ENCODE measurements at regions of chr4 and their contacts with region 1.

Region 1: DNA sequence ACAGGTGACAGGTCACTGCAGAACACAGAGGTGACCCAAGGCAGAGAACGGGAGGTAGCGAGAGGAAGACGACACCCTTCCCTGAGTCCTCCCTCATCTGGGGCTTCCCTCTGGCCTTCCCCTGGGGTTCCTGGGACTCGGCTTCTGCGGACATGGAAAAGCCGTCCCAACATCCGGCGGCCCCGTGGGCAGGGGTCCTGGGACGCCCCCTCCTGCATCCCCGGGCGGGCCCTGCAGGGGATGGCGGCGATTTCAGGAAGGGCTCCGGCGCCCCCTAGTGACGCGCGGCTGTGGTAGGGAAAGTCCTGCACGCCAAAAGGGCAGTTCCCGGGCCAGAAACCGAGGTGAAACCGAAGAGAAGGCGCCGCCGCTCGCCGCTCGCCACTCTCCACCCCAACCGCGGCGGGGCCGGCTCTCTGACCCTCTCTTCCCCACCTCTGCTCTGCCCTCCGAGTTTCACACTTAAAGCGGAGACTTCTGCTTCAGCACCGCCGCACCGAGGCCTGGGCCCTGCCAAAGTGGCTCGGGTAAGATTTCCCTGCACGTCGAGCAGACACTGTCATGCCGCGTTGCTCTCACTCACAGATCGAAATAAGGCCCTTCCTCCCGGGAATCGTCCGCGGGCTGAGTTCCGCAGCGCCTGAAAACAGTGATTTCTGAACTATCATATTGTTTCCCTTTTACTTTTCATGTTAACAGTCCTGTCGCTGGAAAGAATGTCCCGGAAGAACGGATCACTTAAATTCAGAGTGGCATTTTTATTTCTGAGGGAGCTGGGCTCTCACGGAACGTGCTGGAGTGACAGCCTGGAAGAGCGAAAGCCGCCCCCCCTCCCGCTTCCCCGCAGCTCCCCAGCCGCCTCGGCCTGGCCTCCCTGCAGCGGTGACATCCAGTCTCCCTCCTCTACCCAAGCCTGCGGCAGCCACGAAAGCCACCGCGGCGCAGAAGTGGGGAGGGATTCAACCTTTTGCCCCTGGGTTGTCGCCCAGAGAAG is 110.6 kb downstream of the DCTD start:
- DNase-seq: peak; percentile 79
- H3K4me3 ChIP-seq: peak overlapping the region; percentile 38 to 62 (median 49)
- H3K27ac ChIP-seq: peak overlapping the region; percentile 31
- H3K4me1 ChIP-seq: no peaks in the 10 kb centered on the region
- H3K27me3 ChIP-seq: no peaks in the 10 kb centered on the region
- CTCF ChIP-seq: peak; percentile 86 to 96
- POLR2A ChIP-seq: no peak

Region 2: DNA sequence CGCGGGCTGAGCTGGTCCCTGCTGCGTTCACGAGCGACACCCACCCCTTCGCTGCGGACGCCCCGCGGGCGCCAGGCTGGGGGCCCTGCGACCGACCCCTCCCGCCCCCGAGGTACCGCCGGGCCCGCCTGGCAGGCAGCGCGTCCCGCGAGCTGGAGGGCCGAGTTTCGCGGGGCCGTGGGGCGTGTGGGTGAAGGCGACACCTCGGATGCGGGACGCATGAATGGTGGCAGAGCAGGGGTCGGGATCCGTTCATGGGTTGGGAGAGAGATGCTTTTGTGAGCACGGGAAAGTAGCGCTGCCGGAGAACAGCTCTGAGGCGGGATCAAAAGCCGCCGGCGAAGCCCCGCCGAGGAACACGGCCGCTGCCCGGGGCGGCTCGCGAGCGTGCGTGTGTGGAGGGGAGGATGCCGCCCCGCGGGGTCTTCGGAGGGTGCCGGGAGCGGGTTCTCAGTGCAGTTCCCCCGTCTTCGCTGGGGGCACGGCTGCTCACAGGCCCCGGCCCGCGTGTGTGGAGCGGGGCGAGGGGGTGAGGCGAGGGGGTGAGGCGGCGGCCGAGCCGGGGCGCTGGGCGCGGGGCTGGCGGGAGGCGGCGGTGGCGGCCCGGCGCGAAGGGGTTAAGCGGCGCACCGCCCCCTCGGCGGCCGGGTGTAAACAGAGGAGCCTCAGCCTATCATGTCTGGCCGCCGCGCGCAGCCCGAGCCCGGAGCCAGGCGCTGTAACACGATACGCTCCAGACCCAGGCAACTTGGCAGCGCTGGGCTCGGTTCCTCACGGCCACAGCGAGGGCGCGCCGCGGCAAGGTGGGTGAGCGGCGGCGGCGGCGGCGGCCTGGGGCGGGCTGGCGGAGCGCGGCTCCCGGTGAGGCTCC is 358.0 kb before region 1 on chr4:
- CTCF ChIA-PET with region 1: interaction called, 4 read pairs
- POLR2A ChIA-PET with region 1: no interaction called
- dilution Hi-C with region 1: no loop called
- intact Hi-C with region 1: loop called (anchors 2 kb)
- DNase-seq: peak; percentile 87
- H3K4me3 ChIP-seq: peak overlapping the region; percentile 31 to 47 (median 40)
- H3K27ac ChIP-seq: no peak overlapping the region
- H3K4me1 ChIP-seq: peaks cover 11% of the 10 kb centered on the region
- H3K27me3 ChIP-seq: peaks cover 31 to 55% of the 10 kb centered on the region in 2 experiments
- CTCF ChIP-seq: no peak
- POLR2A ChIP-seq: no peak

Region 3: DNA sequence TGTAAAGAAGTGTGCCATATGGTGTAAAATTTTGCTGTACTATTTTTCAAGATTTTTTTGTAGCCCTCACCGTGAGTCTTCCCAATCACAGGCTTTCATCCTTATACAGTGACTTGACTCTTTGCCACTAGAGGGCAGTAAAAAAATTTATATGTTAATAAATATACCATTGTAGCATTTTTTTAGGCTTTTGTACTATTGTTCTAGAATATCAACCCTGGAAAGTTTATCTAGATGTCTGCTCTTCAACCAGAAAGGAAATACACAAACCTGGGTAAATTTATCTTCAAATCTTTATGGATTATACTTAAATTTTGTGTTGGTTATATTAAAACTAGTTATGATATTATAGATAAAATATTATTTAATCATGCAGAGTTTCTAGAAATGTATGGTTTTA is 328.1 kb before region 1 on chr4:
- CTCF ChIA-PET with region 1: interaction called, 8 read pairs
- POLR2A ChIA-PET with region 1: no interaction called
- dilution Hi-C with region 1: no loop called
- intact Hi-C with region 1: loop called (anchors 1 kb)
- DNase-seq: peak; percentile 55
- H3K4me3 ChIP-seq: no peak overlapping the region
- H3K27ac ChIP-seq: no peak overlapping the region
- H3K4me1 ChIP-seq: no peaks in the 10 kb centered on the region
- H3K27me3 ChIP-seq: no peaks in the 10 kb centered on the region
- CTCF ChIP-seq: peak; percentile 34 to 39
- POLR2A ChIP-seq: no peak

Region 4: GRCh38 chr4:182604161-182604622 is 202.4 kb before region 1 on chr4:
- CTCF ChIA-PET with region 1: interaction called, 4 read pairs
- POLR2A ChIA-PET with region 1: no interaction called
- dilution Hi-C with region 1: no loop called
- intact Hi-C with region 1: loop called (anchors 1 kb)
- DNase-seq: peak; percentile 88
- H3K4me3 ChIP-seq: peak overlapping the region in 1 of 3 experiments; percentile 43
- H3K27ac ChIP-seq: peak overlapping the region; percentile 99
- H3K4me1 ChIP-seq: peaks cover 30% of the 10 kb centered on the region
- H3K27me3 ChIP-seq: no peaks in the 10 kb centered on the region
- CTCF ChIP-seq: no peak
- POLR2A ChIP-seq: peak; percentile 61

Region 5: DNA sequence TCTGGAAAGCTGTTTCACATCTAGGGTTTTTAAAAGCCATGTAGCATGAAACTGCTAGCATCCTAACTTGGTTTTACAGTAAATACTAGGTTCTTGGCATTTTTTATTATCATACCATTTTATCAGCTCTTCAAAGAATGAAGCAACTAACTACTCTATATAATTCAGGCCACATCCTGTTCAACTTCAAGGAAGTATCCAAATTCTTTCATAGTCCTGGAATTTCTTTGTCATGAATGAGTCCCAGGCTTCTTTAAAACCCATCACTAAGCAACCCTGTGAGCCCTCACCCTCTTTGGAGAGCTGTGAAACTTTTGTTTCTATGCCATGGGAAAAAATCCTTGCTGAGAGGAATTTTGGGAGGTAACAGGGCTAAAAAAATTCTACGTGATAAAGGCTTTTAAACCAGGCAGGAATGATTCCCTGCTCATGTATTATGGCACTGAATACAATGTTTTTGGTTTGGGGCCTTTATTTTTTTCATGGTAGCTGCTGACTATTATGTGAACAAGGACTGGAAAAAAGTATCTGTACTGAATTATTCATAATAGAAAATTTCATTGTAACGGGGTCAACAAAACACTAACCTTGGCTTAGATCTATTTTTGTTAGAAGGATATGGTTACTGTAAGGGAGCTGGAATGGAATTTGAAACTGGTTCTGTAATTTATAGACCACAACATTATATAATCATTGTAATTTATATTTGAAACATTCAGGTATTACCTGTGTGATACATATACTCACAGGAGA is 54.2 kb before region 1 on chr4:
- CTCF ChIA-PET with region 1: interaction called, 4 read pairs
- POLR2A ChIA-PET with region 1: no interaction called
- dilution Hi-C with region 1: no loop called
- intact Hi-C with region 1: loop called (anchors 1 kb)
- DNase-seq: peak; percentile 67
- H3K4me3 ChIP-seq: no peak overlapping the region
- H3K27ac ChIP-seq: peak overlapping the region; percentile 77
- H3K4me1 ChIP-seq: peaks cover 34% of the 10 kb centered on the region
- H3K27me3 ChIP-seq: no peaks in the 10 kb centered on the region
- CTCF ChIP-seq: no peak
- POLR2A ChIP-seq: no peak

Region 6: DNA sequence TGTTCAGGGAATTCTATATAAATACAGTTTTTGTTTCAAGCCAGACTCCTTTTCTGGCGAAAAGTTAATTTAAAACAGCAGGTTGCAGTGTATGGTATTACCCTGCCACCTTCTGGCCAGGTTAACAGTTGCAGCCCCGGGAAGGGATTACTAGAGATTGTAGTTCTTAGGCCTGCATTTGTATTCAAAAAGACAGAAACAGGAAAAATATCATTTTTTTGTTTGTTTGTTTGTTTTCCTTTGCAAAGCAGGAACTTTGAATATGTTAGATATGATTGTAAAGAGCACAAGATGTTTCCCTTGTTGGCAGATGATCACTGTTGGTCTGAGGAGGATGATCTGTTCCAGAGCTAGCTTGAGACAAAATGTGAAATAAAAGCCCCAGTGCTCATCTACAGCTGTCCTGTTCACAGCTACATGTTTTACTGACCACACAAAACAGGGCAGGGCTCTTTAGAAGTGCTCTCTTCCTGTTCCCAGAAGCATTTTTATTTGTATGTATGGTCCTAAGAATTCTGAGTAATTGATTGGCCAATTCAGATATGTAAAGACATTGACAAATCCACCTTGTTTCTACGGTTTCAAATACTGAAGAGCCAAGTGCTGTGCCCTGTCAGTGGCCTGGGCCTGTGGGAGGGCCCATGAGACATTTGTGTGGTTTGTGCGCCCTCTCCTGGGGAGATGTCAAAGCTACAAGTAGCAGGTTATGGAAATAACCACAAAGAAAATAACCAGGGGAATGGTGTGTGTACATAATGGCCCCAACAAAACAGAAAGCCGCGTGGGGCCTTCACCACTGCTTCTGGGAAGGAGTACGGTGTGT is 455.6 kb after region 1 on chr4:
- CTCF ChIA-PET with region 1: interaction called, 3 read pairs
- POLR2A ChIA-PET with region 1: no interaction called
- dilution Hi-C with region 1: no loop called
- intact Hi-C with region 1: loop called (anchors 1 kb)
- DNase-seq: peak; percentile 74
- H3K4me3 ChIP-seq: no peak overlapping the region
- H3K27ac ChIP-seq: peak overlapping the region; percentile 16
- H3K4me1 ChIP-seq: no peaks in the 10 kb centered on the region
- H3K27me3 ChIP-seq: no peaks in the 10 kb centered on the region
- CTCF ChIP-seq: peak; percentile 76 to 85
- POLR2A ChIP-seq: no peak